Heart right ventricle (tissue), 16 donors: ENCODE measurements at regions of chr20 and their contacts with region 1.

Region 1: DNA sequence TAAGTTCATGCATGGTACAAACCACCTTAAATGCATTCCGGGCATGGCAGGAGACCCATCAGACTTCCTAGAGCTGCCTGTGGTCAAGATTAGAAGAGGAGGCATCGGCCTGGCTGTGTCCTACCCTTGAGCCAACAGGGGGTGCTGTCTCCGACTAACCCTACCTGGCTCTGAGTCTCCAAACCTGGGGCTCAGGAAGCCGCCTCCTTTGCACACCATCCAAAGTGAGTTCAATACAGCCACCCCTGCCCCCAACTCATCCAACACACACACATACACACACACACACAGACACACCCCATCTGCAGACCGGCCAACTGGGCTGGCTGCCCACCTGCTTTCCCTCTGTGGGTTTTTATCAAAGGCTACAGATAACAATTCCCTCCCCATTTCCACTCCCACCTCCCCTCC is 77.0 kb downstream of the JPH2 start:
- DNase-seq: no peak
- ATAC-seq: peak in 5 of 8 donors; percentile 3 to 20 (median 12)
- H3K4me3 ChIP-seq: no peak overlapping the region
- H3K27ac ChIP-seq: no peak overlapping the region
- H3K4me1 ChIP-seq: peaks cover 0 to 44% (median 0%) of the 10 kb centered on the region in 9 donors
- H3K27me3 ChIP-seq: peaks cover 0 to 12% (median 0%) of the 10 kb centered on the region in 7 donors
- CTCF ChIP-seq: peak in 7 of 9 donors; percentile 7 to 38 (median 22)

Region 2: DNA sequence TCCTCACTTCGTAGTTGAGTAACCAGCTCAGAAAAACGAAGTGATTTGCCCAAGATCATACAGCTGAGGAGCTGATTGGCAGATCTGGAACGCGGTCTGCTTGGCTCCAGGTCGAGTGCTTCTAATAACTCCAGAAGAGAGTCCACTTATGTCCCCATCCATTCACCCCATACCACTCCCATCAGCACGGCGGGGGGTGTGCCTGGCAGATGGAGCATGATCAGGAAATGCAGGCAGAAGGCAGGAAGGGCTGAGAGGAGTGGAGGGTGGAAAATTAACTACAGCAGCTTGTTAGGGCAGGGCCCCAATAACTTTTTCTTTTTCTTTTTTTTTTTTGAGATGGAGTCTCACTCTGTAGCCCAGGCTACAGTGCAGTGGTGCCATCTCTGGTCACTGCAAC is 186.1 kb after region 1 on chr20:
- intact Hi-C with region 1: loop called in 2 of 10 experiments (anchors 10 kb)
- DNase-seq: peak in 1 of 2 donors; percentile 46
- ATAC-seq: peak; percentile 38 to 90 (median 79)
- H3K4me3 ChIP-seq: no peak overlapping the region
- H3K27ac ChIP-seq: peak overlapping the region in 3 of 10 donors; percentile 28 to 37 (median 37)
- H3K4me1 ChIP-seq: peaks cover 0 to 32% (median 11%) of the 10 kb centered on the region in 9 donors
- H3K27me3 ChIP-seq: no peaks in the 10 kb centered on the region
- CTCF ChIP-seq: no peak